Heart right ventricle (tissue), 16 donors: ENCODE measurements at regions of chr9 and their contacts with region 1.

Region 1: DNA sequence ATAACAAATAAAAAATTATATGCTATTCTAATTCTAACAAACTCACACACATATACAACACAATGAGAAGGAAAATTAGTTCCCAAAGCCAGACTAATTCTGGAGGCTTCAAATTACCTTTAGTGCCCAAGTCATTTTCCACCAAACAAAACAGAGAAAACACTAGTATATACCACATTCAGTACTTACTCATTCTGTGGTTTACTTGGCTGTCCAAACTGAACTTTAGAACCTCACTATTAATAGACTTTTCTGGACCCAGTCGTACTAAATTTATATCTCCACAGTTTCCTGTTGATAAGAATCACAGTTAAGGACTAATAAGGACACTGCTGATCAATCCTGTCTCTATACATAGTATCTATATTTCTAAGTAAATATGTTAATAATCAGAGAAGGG is 66.4 kb downstream of the SETX start:
- DNase-seq: no peak
- ATAC-seq: peak in 2 of 8 donors; percentile 21 to 28
- H3K4me3 ChIP-seq: no peak overlapping the region
- H3K27ac ChIP-seq: peak overlapping the region in 5 of 10 donors; percentile 13 to 52 (median 22)
- H3K4me1 ChIP-seq: peaks cover 0 to 20% (median 18%) of the 10 kb centered on the region in 9 donors
- H3K27me3 ChIP-seq: no peaks in the 10 kb centered on the region
- CTCF ChIP-seq: no peak

Region 2: DNA sequence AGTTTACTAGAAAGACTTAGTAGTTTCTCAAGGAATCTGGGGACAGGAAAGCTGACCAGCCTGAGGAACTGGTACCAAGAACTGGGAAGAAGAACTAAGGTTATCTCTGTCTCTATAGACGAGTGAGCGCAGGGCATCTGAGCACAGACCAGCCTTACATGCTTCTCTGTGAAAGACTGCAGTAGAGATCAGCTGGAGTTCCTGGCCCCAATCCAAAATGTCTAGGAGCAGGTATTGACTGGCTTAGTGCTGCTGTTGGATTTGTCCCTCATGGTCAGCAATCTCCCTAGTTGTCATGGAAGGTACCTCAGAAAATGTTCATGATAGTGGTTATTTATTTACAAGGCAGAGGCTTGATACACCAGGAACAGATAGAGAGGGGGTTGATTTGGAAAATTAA is 1149.7 kb before region 1 on chr9:
- intact Hi-C with region 1: loop called in 1 of 10 experiments (anchors 10 kb)
- DNase-seq: no peak
- ATAC-seq: no peak
- H3K4me3 ChIP-seq: no peak overlapping the region
- H3K27ac ChIP-seq: no peak overlapping the region
- H3K4me1 ChIP-seq: no peaks in the 10 kb centered on the region
- H3K27me3 ChIP-seq: no peaks in the 10 kb centered on the region
- CTCF ChIP-seq: no peak

Region 3: DNA sequence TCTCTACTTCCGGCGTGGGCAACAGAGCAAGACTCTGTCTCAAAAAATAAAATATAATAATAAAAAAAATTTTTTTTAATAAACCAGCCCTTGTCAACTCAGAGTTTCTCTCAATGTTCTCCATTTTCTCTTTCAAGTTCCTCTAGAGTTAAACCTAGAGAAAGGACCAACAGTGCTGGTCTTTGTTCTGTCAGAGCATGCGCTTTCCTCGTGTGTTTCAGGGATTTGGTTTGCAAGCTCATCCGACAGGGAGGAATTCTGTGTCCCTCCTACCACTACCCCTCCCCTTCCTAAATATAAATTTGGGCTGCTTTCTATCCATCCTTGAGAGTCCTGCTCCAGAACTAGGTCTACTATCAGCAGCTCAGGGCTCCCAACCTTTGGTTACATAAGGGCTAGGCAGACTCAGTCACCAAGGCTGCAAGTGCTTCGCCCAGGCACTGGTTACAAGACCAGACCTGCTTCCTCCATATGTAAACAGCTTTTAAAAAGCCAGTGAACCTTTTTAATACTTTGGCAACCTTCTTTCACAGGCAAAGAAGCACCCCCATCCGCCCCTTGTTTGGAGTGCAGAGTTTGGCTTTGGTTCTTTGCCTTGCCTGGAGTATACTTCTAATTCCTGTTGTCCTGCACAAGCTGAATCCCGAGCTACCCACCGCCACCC is 52.9 kb after region 1 on chr9:
- intact Hi-C with region 1: loop called in 1 of 10 experiments (anchors 10 kb)
- DNase-seq: no peak
- ATAC-seq: peak in 1 of 8 donors; percentile 23
- H3K4me3 ChIP-seq: no peak overlapping the region
- H3K27ac ChIP-seq: no peak overlapping the region
- H3K4me1 ChIP-seq: peaks cover 0 to 3% (median 0%) of the 10 kb centered on the region in 9 donors
- H3K27me3 ChIP-seq: no peaks in the 10 kb centered on the region
- CTCF ChIP-seq: no peak

Region 4: DNA sequence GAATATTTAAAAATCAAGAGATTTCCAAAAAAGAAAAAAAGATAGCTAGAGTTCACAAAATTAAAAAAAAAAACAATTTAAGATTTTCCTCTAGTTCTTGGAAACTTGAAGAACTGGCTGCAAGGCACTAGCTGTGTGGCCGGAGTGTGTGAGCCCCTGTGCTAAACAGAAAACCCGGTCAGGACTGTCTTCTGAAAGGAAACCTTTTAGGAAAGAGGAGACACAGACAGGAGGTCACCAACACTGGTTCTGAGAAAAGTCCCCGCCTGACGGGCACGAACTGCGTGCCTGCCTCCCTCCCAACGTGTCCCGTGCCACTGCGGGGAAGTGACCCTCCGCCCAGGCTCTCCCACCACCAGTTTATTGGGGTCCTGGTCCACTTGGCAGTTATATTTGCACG is 103.1 kb after region 1 on chr9:
- intact Hi-C with region 1: loop called in 2 of 10 experiments (anchors 5 to 10 kb)
- DNase-seq: no peak
- ATAC-seq: no peak
- H3K4me3 ChIP-seq: no peak overlapping the region
- H3K27ac ChIP-seq: peak overlapping the region in 1 of 10 donors; percentile 2
- H3K4me1 ChIP-seq: peaks cover 0 to 8% (median 0%) of the 10 kb centered on the region in 9 donors
- H3K27me3 ChIP-seq: no peaks in the 10 kb centered on the region
- CTCF ChIP-seq: no peak